Tibial artery (tissue), 4 donors: ENCODE measurements at regions of chr5 and their contacts with region 1.

Region 1: GRCh38 chr5:31225118-31225517 is 31.6 kb downstream of the CDH6 start:
- DNase-seq: no peak
- H3K4me3 ChIP-seq: no peak overlapping the region
- H3K27ac ChIP-seq: peak overlapping the region; percentile 71 to 73
- H3K4me1 ChIP-seq: peaks cover 0 to 68% (median 18%) of the 10 kb centered on the region in 4 donors
- H3K27me3 ChIP-seq: no peaks in the 10 kb centered on the region
- CTCF ChIP-seq: no peak

Region 2: GRCh38 chr5:31193591-31194467 is 31.3 kb before region 1 on chr5 and contains the start of gene CDH6:
- intact Hi-C with region 1: loop called (anchors 5 kb)
- DNase-seq: peak; percentile 33 to 79
- H3K4me3 ChIP-seq: peak within 1 kb of the TSS; percentile 72 to 79
- H3K27ac ChIP-seq: peak within 1 kb of the TSS; percentile 82 to 86
- H3K4me1 ChIP-seq: peaks cover 0 to 39% (median 10%) of the 10 kb centered on the region in 4 donors
- H3K27me3 ChIP-seq: no peaks in the 10 kb centered on the region
- CTCF ChIP-seq: no peak